Ovary (tissue), 10 donors: ENCODE measurements at regions of chr2 and their contacts with region 1.

Region 1: GRCh38 chr2:45494269-45494977 is 116.6 kb downstream of the SRBD1 start:
- DNase-seq: no peak
- H3K4me3 ChIP-seq: no peak overlapping the region
- H3K27ac ChIP-seq: no peak overlapping the region
- H3K4me1 ChIP-seq: no peaks in the 10 kb centered on the region
- H3K27me3 ChIP-seq: no peaks in the 10 kb centered on the region
- CTCF ChIP-seq: peak; percentile 53 to 62 (median 62)
- EP300 ChIP-seq: no peak
- POLR2A ChIP-seq: no peak

Region 2: GRCh38 chr2:44975571-44976450 is 518.6 kb before region 1 on chr2:
- intact Hi-C with region 1: loop called (anchors 2 to 5 kb)
- DNase-seq: no peak
- H3K4me3 ChIP-seq: no peak overlapping the region
- H3K27ac ChIP-seq: no peak overlapping the region
- H3K4me1 ChIP-seq: no peaks in the 10 kb centered on the region
- H3K27me3 ChIP-seq: no peaks in the 10 kb centered on the region
- CTCF ChIP-seq: no peak
- EP300 ChIP-seq: no peak
- POLR2A ChIP-seq: no peak

Region 3: GRCh38 chr2:44981136-44982108 is 513.0 kb before region 1 on chr2:
- intact Hi-C with region 1: loop called (anchors 2 to 5 kb)
- DNase-seq: peak; percentile 54 to 81 (median 78)
- H3K4me3 ChIP-seq: no peak overlapping the region
- H3K27ac ChIP-seq: no peak overlapping the region
- H3K4me1 ChIP-seq: no peaks in the 10 kb centered on the region
- H3K27me3 ChIP-seq: no peaks in the 10 kb centered on the region
- CTCF ChIP-seq: peak; percentile 49 to 69 (median 61)
- EP300 ChIP-seq: no peak
- POLR2A ChIP-seq: no peak